Dorsolateral prefrontal cortex (tissue), 120 donors: ENCODE measurements at regions of chr17 and their contacts with region 1.

Region 1: DNA sequence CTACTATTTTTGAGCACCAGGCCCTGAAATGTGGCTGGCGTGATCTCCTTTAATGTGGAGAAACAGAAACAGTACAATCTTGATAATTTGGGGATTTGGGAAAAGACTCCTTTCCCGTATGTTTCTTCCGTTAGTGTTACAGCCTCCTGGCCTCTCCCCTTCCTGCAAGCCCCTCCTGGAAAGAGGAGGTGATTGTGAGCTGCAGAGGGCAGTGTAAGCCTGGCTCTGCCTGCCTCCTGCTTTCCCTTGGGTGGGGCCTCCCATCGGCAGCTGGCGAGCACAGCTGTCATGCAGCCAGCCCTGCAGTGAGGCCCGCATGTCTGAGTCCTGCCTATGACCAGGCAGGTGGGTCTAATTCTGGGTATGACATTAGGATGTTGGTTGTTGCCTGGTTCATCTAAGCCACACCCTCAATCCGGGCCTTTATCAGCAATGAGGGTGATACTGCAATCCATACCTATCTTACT is 48.7 kb upstream of the WSB1 start:
- DNase-seq: peak; percentile 18 to 89 (median 82)
- H3K4me3 ChIP-seq: peak overlapping the region in 21 of 59 donors; percentile 1 to 30 (median 14)
- H3K27ac ChIP-seq: peak overlapping the region; percentile 2 to 92 (median 84)
- H3K27me3 ChIP-seq: no peaks in the 10 kb centered on the region
- CTCF ChIP-seq: peak; percentile 41 to 94 (median 78)

Region 2: GRCh38 chr17:27293898-27294688 is 48.8 kb after region 1 on chr17 and contains the start of gene WSB1:
- intact Hi-C with region 1: loop called (anchors 2 to 5 kb)
- DNase-seq: peak; percentile 90 to 96 (median 94)
- H3K4me3 ChIP-seq: peak within 1 kb of the TSS; percentile 63 to 99 (median 92)
- H3K27ac ChIP-seq: peak within 1 kb of the TSS; percentile 76 to 100 (median 99)
- H3K27me3 ChIP-seq: no peaks in the 10 kb centered on the region
- CTCF ChIP-seq: peak in 41 of 56 donors; percentile 2 to 57 (median 30)
- total RNA-seq, gene WSB1: 91.4 to 483 (median 217) TPM

Region 3: GRCh38 chr17:27326051-27326450 is 80.8 kb after region 1 on chr17:
- intact Hi-C with region 1: no loop called
- DNase-seq: no peak
- H3K4me3 ChIP-seq: no peak overlapping the region
- H3K27ac ChIP-seq: no peak overlapping the region
- H3K27me3 ChIP-seq: no peaks in the 10 kb centered on the region
- CTCF ChIP-seq: no peak